ENCODE measurements at regions of chr15 and their contacts with region 1.

Region 1: DNA sequence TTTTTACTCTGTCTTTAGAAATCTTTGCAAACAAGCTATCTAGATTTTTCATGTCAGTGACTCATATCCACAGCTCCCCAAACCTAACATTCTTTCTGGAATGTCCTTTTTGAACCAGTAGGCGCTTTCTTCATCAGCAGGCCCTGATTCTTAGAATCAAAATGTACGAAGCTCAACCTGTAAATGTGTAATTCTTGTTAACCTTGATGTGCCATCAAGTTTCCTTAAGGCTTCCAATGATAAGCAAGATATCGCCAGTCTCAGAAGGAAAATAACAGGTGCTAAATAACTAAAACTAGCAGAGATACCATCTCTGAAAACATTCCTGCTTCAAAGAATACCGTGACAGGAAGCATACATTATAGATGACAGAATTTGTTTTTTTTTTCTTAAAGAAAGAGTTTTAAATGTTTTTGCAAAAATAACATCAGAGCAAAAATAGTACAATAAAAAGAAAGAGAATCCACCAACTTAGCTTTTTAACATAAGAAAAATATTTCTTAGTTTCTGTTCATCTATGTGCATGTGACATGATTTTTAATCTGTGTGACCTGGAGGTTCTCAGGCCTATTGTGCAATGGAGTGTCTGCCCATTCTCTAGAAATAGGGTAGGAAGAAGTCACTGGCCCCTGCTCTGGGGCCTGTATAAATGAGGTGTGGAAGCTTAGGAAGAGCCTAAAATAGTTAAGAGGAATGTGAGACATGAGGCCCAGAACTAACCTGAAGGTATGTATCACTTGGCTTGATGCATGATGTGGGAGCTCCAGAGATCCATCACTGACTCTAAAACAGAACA is 14.7 kb upstream of the SECISBP2L start:
- DNase-seq: no peak
- ATAC-seq: no peak
- H3K4me3 ChIP-seq: no peak overlapping the region
- H3K27ac ChIP-seq: no peak overlapping the region
- H3K4me1 ChIP-seq: peaks cover 8 to 9% of the 10 kb centered on the region in 2 experiments; a peak in 4 of 5 replicates
- H3K27me3 ChIP-seq: peaks cover 0 to 2% of the 10 kb centered on the region in 2 experiments; a peak in 1 of 5 replicates
- CTCF ChIP-seq: no peak
- EP300 ChIP-seq: no peak
- POLR2A ChIP-seq: no peak
- RAD21 ChIP-seq: no peak

Region 2: GRCh38 chr15:49046220-49047102 is 14.4 kb before region 1 on chr15 and contains the start of gene SECISBP2L:
- CTCF ChIA-PET with region 1: no interaction called
- POLR2A ChIA-PET with region 1: interaction called, 12 read pairs
- in situ Hi-C with region 1: no loop called
- intact Hi-C with region 1: no loop called
- DNase-seq: peak; percentile 90 to 96 (median 92)
- ATAC-seq: peak; percentile 96
- H3K4me3 ChIP-seq: peak within 1 kb of the TSS; percentile 92
- H3K27ac ChIP-seq: peak within 1 kb of the TSS; percentile 82
- H3K4me1 ChIP-seq: peaks cover 8 to 10% of the 10 kb centered on the region in 2 experiments; a peak in 4 of 5 replicates
- H3K27me3 ChIP-seq: no peaks in the 10 kb centered on the region
- CTCF ChIP-seq: peak; percentile 66 to 73 (median 68)
- EP300 ChIP-seq: peak; percentile 57
- POLR2A ChIP-seq: peak; percentile 77
- RAD21 ChIP-seq: peak; percentile 47 to 66
- polyA plus RNA-seq, gene SECISBP2L: 0.55 to 1.1 TPM